ENCODE measurements at regions of chr6 and their contacts with region 1.

Region 1: DNA sequence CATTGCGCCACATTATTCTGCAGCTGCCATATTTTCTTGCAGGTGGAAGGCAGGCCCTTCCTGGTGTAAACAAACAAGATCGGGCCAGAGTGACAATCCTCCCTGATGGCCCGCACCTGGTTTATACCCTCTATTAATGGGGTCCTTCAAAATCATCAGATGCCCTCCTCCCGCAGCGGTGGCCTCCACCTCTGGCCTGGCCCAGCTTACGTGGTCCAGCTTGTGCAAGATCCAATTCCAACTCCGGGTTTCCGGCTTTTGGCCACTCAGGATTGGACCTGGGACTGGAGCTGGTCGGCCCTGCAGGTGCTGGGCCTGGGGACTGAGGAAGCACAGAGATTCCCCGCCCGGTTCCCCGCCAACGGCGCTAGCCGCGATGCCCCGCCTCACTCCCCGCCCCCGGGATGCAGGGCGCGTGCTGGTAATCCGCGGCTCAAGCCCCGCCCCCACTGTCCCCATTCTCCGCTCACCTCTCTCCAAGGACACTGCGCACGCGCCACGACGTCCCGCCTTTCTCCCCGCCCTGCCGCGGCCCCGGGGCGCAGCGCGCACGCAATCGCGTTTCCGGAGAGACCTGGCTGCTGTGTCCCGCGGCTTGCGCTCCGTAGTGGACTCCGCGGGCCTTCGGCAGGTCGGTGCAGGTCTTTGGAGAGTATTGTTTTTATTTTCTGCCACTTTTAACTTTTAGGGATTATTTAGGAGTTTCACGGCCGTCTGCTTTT is at the start of gene TMEM14B:
- DNase-seq: peak; percentile 100
- H3K4me3 Mint-ChIP-seq: peak within 1 kb of the TSS; percentile 93
- H3K27ac Mint-ChIP-seq: peak within 1 kb of the TSS; percentile 94
- H3K4me1 Mint-ChIP-seq: peaks cover 52% of the 10 kb centered on the region
- H3K27me3 Mint-ChIP-seq: no peaks in the 10 kb centered on the region
- total RNA-seq, gene TMEM14B: 82.1 and 83.7 TPM in 2 replicates

Region 2: DNA sequence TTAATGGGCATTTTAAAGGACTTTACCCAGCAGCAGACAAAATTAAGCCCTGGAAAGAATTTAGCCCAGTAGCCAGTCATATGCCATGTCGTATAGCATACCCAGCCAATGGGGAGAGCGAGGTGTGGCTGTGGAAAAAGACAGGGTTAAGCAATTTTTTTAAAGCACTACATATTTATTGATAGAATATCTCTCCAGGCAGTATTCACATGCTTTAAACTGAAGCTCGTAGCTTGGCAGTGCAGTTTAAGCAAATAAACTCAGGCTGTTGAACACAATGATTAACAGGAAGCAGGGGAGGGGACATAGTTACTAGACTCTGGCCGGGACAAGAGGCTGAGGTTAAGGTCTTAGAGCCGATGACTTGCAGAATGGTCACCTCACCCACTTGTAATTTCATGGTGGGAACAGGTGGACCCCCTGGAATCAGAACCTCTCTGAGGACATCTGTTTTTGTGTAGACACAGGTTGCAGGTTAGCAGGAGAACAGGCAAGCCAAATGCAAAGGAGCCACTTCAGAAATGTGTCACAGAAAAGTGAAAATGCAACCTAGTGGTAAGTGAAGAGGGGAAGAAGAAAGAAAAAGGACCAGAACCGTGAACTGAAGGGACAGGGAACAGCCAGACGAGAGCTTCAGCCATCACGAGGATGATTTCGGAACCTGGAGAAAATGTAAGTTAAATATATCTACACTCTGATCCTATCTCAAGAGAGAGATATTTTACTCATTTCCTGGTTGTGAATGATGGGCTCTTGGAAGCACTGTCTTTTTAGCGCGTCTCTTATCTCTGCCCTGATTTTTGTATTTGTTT is 219.0 kb before region 1 on chr6:
- intact Hi-C with region 1: loop called (anchors 2 kb)
- DNase-seq: peak; percentile 41
- H3K4me3 Mint-ChIP-seq: peak overlapping the region; percentile 87
- H3K27ac Mint-ChIP-seq: peak overlapping the region; percentile 64
- H3K4me1 Mint-ChIP-seq: peaks cover 48% of the 10 kb centered on the region
- H3K27me3 Mint-ChIP-seq: peaks cover 5% of the 10 kb centered on the region

Region 3: GRCh38 chr6:10722820-10723566 is 24.4 kb before region 1 on chr6 and contains the start of gene TMEM14C:
- intact Hi-C with region 1: loop called (anchors 1 kb)
- DNase-seq: peak; percentile 88
- H3K4me3 Mint-ChIP-seq: peak within 1 kb of the TSS; percentile 91
- H3K27ac Mint-ChIP-seq: peak within 1 kb of the TSS; percentile 93
- H3K4me1 Mint-ChIP-seq: peaks cover 55% of the 10 kb centered on the region
- H3K27me3 Mint-ChIP-seq: no peaks in the 10 kb centered on the region
- total RNA-seq, gene TMEM14C: 57.3 and 63.1 TPM in 2 replicates